ENCODE measurements at regions of chr1 and their contacts with region 1.

Region 1: GRCh38 chr1:205658943-205659581 is 21.2 kb downstream of the SLC45A3 start:
- DNase-seq: peak; percentile 89
- CTCF ChIP-seq: peak; percentile 97

Region 2: DNA sequence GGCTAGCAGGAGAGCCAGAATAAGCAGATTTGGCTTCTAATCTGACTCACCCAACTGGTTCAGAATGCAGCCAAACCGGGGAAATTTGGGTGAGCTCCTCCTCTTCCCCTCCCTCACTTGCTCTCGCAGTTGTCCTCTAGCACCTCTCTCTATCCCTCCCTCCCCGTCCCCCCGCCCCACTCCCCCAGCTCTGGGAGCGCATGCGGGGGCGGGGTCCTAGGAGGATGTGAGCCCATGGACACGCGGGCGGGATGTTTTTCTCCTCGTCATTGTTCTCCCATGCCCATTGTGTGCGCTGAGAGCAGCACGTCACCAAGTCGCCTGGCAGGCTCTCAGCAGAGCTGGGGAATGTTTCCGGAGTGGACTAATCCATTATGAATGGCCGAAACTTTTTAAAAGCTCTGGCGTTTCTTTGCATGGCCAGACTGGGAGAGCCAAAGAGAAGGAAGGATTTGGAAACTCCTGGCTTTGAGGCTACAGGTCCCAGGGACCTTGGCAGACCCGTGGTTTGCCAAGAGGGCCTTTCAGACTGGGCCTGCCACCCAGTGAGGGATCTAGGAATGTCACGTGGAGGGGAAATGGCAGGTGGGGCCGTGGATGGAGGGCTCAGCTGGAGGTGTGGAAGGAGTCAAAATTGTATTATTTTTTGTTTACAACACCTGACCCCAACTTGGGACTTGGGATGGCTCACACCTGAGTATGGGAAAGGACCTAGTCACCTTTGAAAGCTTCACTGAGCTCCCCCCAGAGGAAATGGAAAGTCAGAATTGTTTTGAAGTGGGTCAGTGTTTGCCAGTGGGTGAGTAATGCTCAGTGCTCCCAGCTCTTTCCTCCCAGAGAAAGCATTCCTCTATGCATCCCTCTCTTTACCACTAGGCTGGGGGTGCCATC is 115.4 kb before region 1 on chr1:
- CTCF ChIA-PET with region 1: interaction called, 24 read pairs
- POLR2A ChIA-PET with region 1: no interaction called
- DNase-seq: no peak
- CTCF ChIP-seq: no peak

Region 3: DNA sequence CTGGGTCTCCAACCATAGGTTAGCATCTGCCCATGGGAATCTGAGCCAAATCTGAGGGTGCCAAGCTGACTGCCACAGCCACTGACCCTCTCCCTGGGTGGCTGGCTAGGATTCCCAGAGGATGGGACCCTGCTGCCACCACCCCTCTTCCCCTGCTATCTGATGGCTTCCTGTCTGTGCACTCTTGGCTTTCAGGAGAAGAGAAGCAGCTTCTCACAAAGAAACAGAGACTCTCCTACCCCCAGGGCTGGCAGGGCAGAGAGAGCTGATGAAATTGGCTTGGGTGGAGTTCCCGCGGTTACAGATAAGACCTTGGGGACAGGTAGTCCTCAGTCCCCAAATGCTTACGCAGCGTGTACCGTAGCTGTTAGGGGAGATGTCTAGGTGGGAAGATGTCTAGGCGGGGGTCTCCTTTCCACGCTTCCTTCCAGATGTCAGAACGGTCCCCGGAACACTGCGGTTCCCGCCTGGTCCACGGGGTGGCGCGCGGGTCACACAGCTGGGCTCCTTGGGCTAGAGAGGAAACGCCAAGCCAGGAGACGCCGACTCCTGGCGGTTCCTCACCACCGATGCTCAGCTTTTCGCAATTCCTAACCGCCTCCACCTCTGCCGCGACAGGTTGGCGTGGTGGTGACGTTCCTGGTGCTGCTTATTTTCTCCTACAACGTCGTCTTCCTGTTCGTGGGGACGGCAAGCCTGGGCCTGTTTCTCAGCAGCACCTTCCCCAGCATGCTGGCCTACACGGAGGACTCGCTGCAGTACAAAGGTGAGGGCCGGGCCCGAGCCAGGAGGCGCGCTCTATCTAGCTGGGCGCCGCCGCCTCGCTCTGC is 67.3 kb before region 1 on chr1:
- CTCF ChIA-PET with region 1: interaction called, 509 read pairs
- POLR2A ChIA-PET with region 1: no interaction called
- DNase-seq: peak; percentile 83
- CTCF ChIP-seq: peak; percentile 98

Region 4: GRCh38 chr1:205680073-205680851 is 21.2 kb after region 1 on chr1 and contains the start of gene SLC45A3:
- CTCF ChIA-PET with region 1: interaction called, 46 read pairs
- POLR2A ChIA-PET with region 1: no interaction called
- DNase-seq: peak; percentile 53
- CTCF ChIP-seq: no peak

Region 5: DNA sequence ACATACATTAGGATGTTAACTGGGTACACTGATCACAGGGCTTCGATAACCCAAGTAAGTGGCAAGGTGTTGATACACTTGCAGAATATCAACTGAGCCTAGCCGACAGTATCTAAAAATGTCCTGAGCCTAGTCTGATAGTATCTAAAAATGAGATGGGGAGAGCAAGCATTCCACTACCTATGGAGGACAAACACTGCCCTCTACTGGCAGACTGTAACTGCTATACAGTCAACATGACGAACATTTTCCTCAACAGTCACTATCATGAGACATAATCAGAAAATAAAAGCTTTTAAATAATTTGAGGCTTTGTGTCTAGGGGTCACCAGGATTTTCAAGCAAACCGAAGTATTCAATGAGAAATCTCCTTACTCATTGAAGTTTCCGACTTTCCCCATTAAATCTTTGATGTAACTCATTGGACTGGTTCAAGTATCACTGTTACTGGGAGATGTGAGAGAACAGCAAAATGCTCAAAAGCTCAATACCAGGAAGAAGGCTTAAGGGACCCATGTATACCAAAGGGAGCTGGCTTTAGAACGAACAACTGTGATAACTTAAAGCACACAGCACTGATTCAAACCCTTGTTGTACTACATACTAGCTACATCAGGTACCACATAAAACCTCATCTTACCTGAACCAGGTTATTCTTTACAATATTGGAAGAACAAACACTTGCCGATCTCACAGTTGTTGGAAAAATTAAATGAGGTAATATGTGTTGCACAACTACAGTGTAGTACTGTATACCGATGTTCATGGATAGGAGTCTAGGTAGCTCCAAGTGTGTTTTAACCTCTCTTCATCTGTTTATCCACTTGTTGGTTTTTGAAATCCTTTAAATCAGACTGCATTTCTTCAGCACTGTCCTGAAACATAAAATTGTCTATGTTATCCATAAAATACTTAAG is 52.3 kb after region 1 on chr1:
- CTCF ChIA-PET with region 1: interaction called, 372 read pairs
- POLR2A ChIA-PET with region 1: interaction called, 3 read pairs
- DNase-seq: peak; percentile 58
- CTCF ChIP-seq: peak; percentile 83

Region 6: GRCh38 chr1:205775015-205775716 is 116.1 kb after region 1 on chr1 and contains the start of gene RAB29:
- CTCF ChIA-PET with region 1: interaction called, 12 read pairs
- POLR2A ChIA-PET with region 1: no interaction called
- DNase-seq: peak; percentile 83
- CTCF ChIP-seq: no peak

Region 7: GRCh38 chr1:205883792-205884191 is 224.7 kb after region 1 on chr1:
- CTCF ChIA-PET with region 1: no interaction called
- POLR2A ChIA-PET with region 1: no interaction called
- DNase-seq: no peak
- CTCF ChIP-seq: no peak

Region 8: GRCh38 chr1:205977402-205978014 is 318.4 kb after region 1 on chr1:
- CTCF ChIA-PET with region 1: interaction called, 105 read pairs
- POLR2A ChIA-PET with region 1: no interaction called
- DNase-seq: peak; percentile 80
- CTCF ChIP-seq: peak; percentile 95

Measured in GM10248 (cell line).